H1 (cell line): ENCODE measurements at regions of chr11 and their contacts with region 1.

Region 1: DNA sequence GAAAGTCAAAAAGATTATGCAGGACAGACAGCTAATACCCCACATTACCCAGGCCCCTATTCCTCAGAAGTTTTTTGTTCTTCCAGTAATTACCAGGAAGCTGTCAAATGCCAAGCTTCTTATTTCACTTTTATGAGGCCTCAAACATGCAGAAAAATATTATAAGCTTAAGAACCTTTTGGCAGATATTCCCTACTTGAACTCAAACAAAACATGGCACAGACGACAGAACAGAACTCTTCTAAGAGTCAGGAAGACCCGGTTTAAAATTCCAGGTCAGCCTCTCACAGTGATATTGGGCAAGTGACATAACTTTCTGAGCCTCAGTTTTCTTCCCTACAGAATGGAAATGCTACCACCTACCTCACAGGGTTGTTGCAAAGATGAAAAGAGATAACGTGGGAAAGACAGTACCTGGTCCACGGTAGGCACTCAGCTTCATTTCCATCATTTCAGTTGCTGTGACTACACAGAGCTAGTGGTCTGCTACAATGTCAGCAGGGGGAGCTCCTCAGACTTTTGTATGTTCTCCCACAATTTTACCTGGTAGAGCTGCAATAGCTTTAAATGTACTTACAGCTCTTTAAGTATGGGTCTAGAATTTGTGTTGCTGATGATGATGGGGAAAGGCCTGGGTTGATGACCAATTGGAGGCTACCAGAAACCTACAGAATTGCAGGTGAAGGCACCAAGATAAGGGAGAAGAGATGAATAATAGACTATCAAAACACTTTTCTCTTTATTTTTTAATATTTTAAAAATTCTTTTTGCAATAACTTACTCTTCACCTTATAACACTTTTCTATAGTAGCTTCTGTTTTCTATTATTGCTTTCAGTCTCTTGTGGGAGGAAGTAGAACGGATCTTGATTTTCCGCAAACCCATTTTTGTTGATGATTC is 98.3 kb upstream of the CHRM4 start:
- DNase-seq: peak in 1 of 2 experiments; percentile 9
- H3K4me3 ChIP-seq: no peak overlapping the region
- H3K27ac ChIP-seq: no peak overlapping the region
- H3K4me1 ChIP-seq: no peaks in the 10 kb centered on the region
- H3K27me3 ChIP-seq: no peaks in the 10 kb centered on the region
- CTCF ChIP-seq: peak; percentile 13 to 77 (median 67)
- EP300 ChIP-seq: no peak
- POLR2A ChIP-seq: no peak
- RAD21 ChIP-seq: peak; percentile 51 to 68

Region 2: GRCh38 chr11:46200537-46201281 is 289.2 kb before region 1 on chr11:
- CTCF ChIA-PET with region 1: no interaction called
- POLR2A ChIA-PET with region 1: no interaction called
- DNase-seq: peak in 1 of 2 experiments; percentile 42
- H3K4me3 ChIP-seq: no peak overlapping the region
- H3K27ac ChIP-seq: no peak overlapping the region
- H3K4me1 ChIP-seq: peaks cover 0 to 6% (median 3%) of the 10 kb centered on the region in 4 experiments; a peak in 4 of 7 replicates
- H3K27me3 ChIP-seq: no peaks in the 10 kb centered on the region
- CTCF ChIP-seq: no peak
- EP300 ChIP-seq: no peak
- POLR2A ChIP-seq: no peak
- RAD21 ChIP-seq: no peak

Region 3: DNA sequence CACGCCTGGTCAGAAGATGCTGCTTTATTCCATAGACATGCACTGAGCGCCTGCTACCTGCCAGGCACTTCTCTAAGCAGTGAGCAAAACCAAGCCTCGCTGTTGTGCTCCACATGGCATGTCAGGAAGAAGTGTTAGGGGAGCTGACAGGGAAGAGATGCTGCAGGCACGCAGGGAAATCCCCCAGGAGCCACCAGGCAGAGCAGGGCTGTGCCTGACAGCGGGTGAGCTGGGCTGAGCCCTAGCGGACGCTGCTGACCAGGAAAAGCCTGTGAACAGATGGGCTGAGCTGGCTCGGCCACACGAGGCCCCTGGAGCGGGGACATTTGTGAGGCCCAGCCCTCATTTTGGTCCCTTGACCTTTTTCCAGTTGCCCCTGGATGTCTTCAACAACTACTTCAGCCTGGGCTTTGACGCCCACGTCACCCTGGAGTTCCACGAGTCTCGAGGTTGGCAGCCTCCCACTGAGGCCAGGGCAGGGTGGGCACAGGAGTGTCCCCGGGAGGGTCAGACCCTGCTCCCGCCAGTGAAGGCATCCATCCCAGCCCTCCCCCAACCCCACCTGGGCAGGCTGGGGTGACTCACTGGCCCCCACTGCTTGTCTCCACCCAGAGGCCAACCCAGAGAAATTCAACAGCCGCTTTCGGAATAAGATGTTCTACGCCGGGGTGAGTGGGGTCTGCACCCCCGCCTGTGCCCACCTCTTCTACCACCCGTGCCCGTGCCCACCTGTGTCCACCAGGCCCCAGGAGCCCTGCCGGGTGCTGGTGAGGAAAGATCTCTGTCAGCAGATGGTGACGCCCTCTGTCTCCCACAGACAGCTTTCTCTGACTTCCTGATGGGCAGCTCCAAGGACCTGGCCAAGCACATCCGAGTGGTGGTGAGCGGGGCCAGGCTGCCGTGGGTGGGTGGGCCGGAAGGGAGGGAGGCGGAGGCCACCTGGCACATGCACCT is 115.8 kb before region 1 on chr11:
- CTCF ChIA-PET with region 1: no interaction called
- POLR2A ChIA-PET with region 1: no interaction called
- DNase-seq: no peak
- H3K4me3 ChIP-seq: no peak overlapping the region
- H3K27ac ChIP-seq: no peak overlapping the region
- H3K4me1 ChIP-seq: peaks cover 0 to 6% (median 4%) of the 10 kb centered on the region in 4 experiments; a peak in 5 of 7 replicates
- H3K27me3 ChIP-seq: no peaks in the 10 kb centered on the region
- CTCF ChIP-seq: no peak
- EP300 ChIP-seq: no peak
- POLR2A ChIP-seq: no peak
- RAD21 ChIP-seq: no peak

Region 4: GRCh38 chr11:46410021-46410420 is 79.9 kb before region 1 on chr11:
- CTCF ChIA-PET with region 1: interaction called, 38 read pairs
- POLR2A ChIA-PET with region 1: no interaction called
- DNase-seq: peak in 1 of 2 experiments; percentile 55
- H3K4me3 ChIP-seq: no peak overlapping the region
- H3K27ac ChIP-seq: no peak overlapping the region
- H3K4me1 ChIP-seq: peaks cover 0 to 2% (median 0%) of the 10 kb centered on the region in 4 experiments; a peak in 1 of 7 replicates
- H3K27me3 ChIP-seq: no peaks in the 10 kb centered on the region
- CTCF ChIP-seq: peak; percentile 62 to 81 (median 72)
- EP300 ChIP-seq: no peak
- POLR2A ChIP-seq: no peak
- RAD21 ChIP-seq: peak; percentile 72 to 76

Region 5: DNA sequence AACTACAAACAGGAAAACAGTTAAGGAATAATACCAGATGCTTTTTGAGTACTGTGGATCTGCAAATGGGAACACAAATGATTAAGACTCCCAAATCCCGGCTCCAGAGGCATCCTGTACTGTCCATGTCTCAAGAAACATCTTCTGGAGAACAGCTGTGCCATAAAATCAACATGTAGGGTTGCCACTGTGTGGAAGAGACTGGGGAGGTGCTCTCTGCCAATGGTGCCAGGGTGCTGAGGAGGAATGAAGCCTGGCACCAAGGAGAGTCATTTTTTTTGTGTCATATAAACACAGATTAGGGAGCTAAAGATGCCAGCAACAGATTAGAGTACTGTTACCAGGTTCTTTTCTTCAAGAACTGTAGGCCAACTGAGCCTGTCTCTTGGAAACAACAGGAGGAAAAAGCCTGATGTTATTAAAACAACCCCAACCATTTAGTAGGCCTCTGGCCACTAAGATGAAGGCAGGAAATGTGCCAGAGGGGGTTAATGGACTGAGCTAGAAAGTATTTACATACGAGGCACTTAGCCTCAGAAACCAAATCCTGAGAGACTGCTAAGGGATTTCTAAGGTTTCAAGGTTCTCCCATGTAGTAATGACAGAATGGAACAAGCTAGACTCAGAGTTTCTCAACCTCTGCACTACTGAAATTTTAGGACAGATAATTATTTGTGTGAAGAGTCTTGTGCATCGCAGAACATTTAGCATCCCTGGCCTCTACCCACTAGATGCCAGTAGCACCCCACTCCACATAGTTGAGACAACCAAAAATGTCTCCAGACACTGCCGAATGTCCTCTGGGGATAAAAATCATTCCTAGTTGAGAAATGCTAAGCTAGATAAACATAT is 43.8 kb before region 1 on chr11:
- CTCF ChIA-PET with region 1: interaction called, 14 read pairs
- POLR2A ChIA-PET with region 1: no interaction called
- DNase-seq: no peak
- H3K4me3 ChIP-seq: no peak overlapping the region
- H3K27ac ChIP-seq: no peak overlapping the region
- H3K4me1 ChIP-seq: peaks cover 0 to 7% (median 2%) of the 10 kb centered on the region in 4 experiments; a peak in 4 of 7 replicates
- H3K27me3 ChIP-seq: no peaks in the 10 kb centered on the region
- CTCF ChIP-seq: peak in 1 of 3 experiments; percentile 15; a peak in 1 of 4 replicates
- EP300 ChIP-seq: no peak
- POLR2A ChIP-seq: no peak
- RAD21 ChIP-seq: peak; percentile 34 to 50; a peak in 3 of 4 replicates

Region 6: DNA sequence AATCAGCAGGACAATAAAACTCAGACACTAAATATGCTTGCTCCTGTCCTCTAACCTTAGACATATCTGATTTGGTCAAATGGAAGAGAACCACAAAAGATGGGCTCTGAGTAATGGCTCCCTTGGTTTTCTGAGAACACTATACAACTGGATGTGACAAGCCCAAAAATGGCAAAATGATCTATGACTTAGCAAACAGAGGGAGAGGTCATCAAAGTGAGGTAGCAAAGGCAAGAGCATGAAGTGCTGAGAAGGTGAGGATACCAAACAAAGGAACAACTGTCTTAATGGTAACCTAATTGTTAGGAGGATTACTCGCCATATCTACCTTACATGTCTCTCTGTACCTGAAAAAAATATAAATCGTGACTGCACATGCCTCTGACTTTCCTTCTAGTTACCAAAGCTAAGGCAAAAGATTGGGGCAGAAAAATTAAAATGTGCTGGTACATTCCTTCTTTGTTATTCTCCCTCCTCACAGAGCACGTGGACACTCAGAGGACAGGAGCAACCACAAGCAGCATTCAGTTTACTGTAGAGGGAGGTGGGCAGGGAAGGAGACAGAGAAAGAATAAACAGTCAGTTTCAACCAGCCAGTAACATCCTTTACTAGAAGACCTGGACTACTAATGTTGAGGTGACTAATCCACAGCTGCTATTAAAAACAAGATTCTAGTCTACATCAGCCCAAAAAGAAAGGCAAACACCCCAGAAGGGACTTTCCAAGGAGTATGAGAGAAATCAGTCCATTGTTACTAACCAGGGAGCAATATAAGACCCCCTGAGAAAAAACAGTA is 15.1 kb after region 1 on chr11:
- CTCF ChIA-PET with region 1: interaction called, 118 read pairs
- POLR2A ChIA-PET with region 1: interaction called, 3 read pairs
- DNase-seq: no peak
- H3K4me3 ChIP-seq: no peak overlapping the region
- H3K27ac ChIP-seq: no peak overlapping the region
- H3K4me1 ChIP-seq: peaks cover 2 to 10% (median 5%) of the 10 kb centered on the region in 4 experiments; a peak in 5 of 7 replicates
- H3K27me3 ChIP-seq: no peaks in the 10 kb centered on the region
- CTCF ChIP-seq: no peak
- EP300 ChIP-seq: no peak
- POLR2A ChIP-seq: no peak
- RAD21 ChIP-seq: no peak

Region 7: DNA sequence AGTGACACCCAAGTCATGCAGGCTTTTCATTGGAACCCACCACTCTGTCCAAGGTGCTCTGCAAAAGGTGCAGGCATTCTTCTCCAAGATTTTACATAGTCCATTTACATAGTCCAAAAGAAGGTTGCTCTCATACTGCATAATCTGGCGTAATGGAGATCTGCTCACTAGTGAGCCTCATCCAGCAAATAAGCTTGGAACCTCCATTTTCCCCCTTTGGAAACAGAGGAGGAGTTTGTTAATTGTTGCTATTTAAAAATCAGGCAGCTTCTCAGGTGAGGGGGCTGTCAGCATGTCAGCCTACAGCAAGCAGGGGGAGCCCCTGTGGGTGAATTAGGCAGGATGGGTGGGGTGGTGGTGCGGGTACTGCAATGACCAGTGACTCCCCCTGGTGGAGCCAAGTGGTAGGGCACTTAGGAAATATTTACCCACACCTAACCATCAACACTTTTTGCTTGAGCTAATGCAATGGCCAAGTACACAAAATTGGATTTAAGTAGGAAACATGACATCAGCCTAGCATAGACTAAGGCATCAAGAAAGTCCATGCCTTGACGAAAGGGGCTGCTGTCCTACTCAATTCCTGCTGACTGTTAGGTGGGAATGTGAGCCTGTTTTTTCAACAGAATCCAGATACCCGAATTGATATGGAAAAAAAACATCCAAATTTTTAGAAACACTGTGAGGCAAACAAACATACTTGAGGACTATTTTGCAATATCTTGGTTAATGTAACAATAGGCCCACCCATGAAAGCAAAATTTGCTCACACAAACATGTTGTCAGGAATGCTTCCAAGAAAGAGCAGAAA is 39.4 kb after region 1 on chr11:
- CTCF ChIA-PET with region 1: interaction called, 35 read pairs
- POLR2A ChIA-PET with region 1: no interaction called
- DNase-seq: peak; percentile 60 to 92
- H3K4me3 ChIP-seq: no peak overlapping the region
- H3K27ac ChIP-seq: no peak overlapping the region
- H3K4me1 ChIP-seq: peaks cover 0 to 6% (median 1%) of the 10 kb centered on the region in 4 experiments; a peak in 3 of 7 replicates
- H3K27me3 ChIP-seq: no peaks in the 10 kb centered on the region
- CTCF ChIP-seq: peak; percentile 89 to 98 (median 97)
- EP300 ChIP-seq: no peak
- POLR2A ChIP-seq: no peak
- RAD21 ChIP-seq: peak; percentile 67 to 73